ENCODE measurements at regions of chr11 and their contacts with region 1.

Region 1: DNA sequence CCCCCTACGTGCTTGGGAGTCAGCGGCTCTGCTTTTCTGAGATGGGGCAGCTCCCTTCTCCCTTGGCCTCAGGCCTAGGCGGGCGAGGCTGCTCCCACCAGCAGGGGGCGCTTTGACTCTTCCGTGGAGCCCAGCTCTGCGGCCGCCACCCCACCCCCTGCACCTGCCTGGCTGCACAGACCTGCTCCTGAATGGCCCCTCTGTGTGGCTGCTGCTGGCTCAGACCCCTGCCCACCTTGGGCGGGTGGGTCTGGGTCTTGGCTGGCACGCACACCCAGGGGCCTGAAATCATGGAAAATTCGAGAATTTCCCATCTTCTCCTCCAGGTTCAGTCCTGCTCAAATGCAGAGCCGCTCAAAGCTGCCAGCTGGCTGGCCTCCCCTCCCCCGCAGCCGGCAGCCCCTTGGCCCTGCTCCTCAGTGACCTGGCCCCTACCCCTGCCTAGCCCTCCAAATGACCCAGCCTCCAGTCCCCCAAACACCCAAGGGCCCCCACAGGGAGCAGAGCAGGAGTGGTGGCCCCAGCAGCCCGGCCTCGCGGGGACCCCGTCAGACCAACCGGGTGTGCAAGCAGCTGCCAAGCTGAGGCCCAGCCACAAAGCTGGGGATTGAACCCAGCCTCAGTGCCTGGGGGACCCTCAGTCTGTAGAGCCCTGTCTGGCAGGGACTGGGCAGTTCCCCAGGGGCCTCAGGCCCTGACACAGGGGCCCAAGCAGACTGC is 9.0 kb downstream of the PRR33 start:
- DNase-seq: peak; percentile 60
- H3K4me3 ChIP-seq: no peak overlapping the region
- H3K27ac ChIP-seq: no peak overlapping the region
- H3K4me1 ChIP-seq: no peaks in the 10 kb centered on the region
- H3K27me3 ChIP-seq: no peaks in the 10 kb centered on the region
- CTCF ChIP-seq: peak; percentile 91 to 98
- POLR2A ChIP-seq: no peak

Region 2: DNA sequence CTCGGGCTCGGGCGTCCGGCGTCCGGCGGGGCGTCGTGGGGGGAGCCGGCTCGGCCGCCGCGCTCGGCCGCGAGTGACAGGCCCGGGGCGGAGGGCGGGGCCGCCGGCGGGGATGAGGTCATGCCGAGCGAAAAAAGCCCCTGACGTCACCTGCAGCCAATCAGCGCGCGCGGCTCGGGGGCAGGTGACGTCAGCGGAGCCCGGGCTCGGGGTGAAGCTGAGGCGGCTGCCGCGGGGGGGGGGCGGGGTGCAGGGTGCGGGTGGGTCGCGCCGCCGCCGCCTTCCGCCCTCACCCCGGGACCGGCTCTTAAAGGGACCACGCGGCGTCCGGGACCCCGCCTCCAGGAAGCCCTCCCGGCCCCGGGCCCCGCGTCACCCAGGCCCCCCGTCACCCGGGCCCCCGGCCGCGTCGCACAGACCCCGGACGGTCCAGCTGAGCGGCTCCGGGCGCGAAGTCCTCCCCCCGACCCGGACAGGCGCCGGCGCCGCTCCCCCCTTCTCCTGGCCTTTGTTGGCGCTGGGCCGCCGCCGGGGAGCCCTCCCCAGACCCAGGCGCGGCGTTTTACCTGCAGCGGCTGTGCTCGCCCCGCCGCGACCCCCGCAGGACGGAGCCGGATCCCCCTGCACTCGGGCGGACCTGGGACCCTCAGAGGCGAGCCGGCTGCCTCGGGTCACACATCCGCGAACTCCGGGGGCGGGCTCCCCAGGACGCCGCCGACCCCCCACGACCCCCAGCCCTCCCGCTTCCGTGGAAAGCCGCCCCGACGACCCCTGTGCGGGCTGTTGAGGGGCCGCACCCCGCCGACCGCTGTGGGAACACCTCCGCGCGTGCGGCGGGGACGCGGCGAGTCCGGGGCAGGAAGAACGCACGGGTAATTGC is 310.2 kb before region 1 on chr11 and contains the start of gene DUSP8:
- CTCF ChIA-PET with region 1: no interaction called
- POLR2A ChIA-PET with region 1: no interaction called
- dilution Hi-C with region 1: no loop called
- intact Hi-C with region 1: no loop called
- DNase-seq: peak; percentile 80
- H3K4me3 ChIP-seq: peak within 1 kb of the TSS; percentile 29 to 43 (median 42)
- H3K27ac ChIP-seq: peak within 1 kb of the TSS; percentile 29
- H3K4me1 ChIP-seq: peaks cover 5% of the 10 kb centered on the region
- H3K27me3 ChIP-seq: peaks cover 10 to 16% of the 10 kb centered on the region in 2 experiments
- CTCF ChIP-seq: no peak
- POLR2A ChIP-seq: no peak
- total RNA-seq, gene DUSP8: 5.9 and 8.7 TPM in 2 replicates

Region 3: GRCh38 chr11:1694064-1694845 is 188.4 kb before region 1 on chr11:
- CTCF ChIA-PET with region 1: interaction called, 26 read pairs
- POLR2A ChIA-PET with region 1: no interaction called
- dilution Hi-C with region 1: no loop called
- intact Hi-C with region 1: no loop called
- DNase-seq: peak; percentile 56
- H3K4me3 ChIP-seq: no peak overlapping the region
- H3K27ac ChIP-seq: no peak overlapping the region
- H3K4me1 ChIP-seq: peaks cover 16% of the 10 kb centered on the region
- H3K27me3 ChIP-seq: no peaks in the 10 kb centered on the region
- CTCF ChIP-seq: peak; percentile 94 to 98
- POLR2A ChIP-seq: no peak

Region 4: GRCh38 chr11:1845561-1846452 is 36.9 kb before region 1 on chr11:
- CTCF ChIA-PET with region 1: interaction called, 16 read pairs
- POLR2A ChIA-PET with region 1: no interaction called
- dilution Hi-C with region 1: no loop called
- intact Hi-C with region 1: no loop called
- DNase-seq: no peak
- H3K4me3 ChIP-seq: no peak overlapping the region
- H3K27ac ChIP-seq: no peak overlapping the region
- H3K4me1 ChIP-seq: no peaks in the 10 kb centered on the region
- H3K27me3 ChIP-seq: no peaks in the 10 kb centered on the region
- CTCF ChIP-seq: no peak
- POLR2A ChIP-seq: no peak

Region 5: DNA sequence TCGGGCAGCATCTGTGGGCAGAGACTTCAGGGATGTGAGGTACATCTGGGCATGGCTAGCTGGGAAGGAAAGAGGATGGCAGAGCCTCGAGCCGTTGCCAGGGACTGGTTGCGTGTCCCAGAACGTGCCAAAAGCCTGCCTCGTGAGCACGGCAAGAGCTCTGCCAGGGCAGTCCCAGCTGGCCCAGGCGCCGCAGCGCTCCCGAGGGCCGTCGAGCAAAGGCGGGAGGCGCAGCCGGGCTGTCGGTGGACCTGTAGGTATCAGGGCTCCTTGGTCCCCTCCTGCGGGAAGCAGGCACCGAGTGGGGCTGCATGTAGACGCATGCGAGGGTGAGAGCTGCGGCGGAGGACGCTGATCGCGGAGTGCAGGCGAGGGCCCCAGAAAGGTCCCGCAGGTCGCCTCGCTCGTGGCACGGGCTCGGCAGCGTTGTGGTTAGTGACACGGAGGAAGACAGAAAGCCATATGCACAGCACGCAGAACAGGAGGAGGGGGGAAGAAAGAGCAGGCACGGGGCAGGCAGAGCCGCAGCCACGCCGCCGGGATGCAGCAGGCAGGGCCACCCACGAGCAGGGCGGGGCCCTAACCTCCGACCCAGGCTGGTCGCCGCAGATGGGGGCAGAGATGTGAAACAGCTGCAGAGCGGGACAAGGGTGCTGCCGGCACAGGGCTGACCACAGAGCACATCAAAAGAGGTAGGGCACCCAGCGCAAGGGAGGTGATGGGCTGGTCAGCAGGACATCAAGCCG is 11.8 kb before region 1 on chr11:
- CTCF ChIA-PET with region 1: interaction called, 21 read pairs
- POLR2A ChIA-PET with region 1: no interaction called
- dilution Hi-C with region 1: no loop called
- intact Hi-C with region 1: no loop called
- DNase-seq: no peak
- H3K4me3 ChIP-seq: no peak overlapping the region
- H3K27ac ChIP-seq: no peak overlapping the region
- H3K4me1 ChIP-seq: no peaks in the 10 kb centered on the region
- H3K27me3 ChIP-seq: peaks cover 0 to 3% of the 10 kb centered on the region in 2 experiments
- CTCF ChIP-seq: no peak
- POLR2A ChIP-seq: no peak

Region 6: GRCh38 chr11:1917671-1918516 is 35.2 kb after region 1 on chr11:
- CTCF ChIA-PET with region 1: interaction called, 20 read pairs
- POLR2A ChIA-PET with region 1: no interaction called
- dilution Hi-C with region 1: no loop called
- intact Hi-C with region 1: no loop called
- DNase-seq: no peak
- H3K4me3 ChIP-seq: no peak overlapping the region
- H3K27ac ChIP-seq: no peak overlapping the region
- H3K4me1 ChIP-seq: no peaks in the 10 kb centered on the region
- H3K27me3 ChIP-seq: no peaks in the 10 kb centered on the region
- CTCF ChIP-seq: peak; percentile 17 to 42
- POLR2A ChIP-seq: no peak

Region 7: DNA sequence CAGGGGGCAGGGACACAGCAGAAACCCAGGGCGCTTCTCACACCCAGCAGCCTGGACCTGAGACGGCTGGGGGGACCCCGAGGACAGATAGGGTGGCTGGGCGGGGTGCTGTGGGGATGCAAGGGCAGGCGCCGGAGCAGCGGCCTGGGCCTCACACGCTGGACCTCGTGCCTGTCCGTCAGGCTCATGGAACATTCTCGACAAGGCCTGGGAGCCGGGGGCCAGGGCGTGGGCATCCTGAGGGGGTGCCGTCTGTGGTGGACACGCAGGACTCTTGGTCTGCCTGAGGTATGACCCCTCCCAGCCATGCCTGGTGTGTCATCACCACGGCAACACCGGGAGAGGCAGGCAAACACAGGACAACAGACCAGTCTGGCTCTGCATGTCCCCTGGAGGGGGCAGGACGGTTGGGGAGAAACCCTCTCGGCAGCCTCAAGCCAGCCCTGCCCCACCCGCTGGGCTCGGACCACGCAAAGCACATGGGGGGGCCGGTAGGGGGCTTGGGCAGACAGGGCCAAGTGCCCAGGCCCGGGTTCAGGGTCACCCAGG is 85.8 kb after region 1 on chr11:
- CTCF ChIA-PET with region 1: interaction called, 23 read pairs
- POLR2A ChIA-PET with region 1: no interaction called
- dilution Hi-C with region 1: no loop called
- intact Hi-C with region 1: no loop called
- DNase-seq: no peak
- H3K4me3 ChIP-seq: no peak overlapping the region
- H3K27ac ChIP-seq: no peak overlapping the region
- H3K4me1 ChIP-seq: no peaks in the 10 kb centered on the region
- H3K27me3 ChIP-seq: no peaks in the 10 kb centered on the region
- CTCF ChIP-seq: no peak
- POLR2A ChIP-seq: no peak

Region 8: DNA sequence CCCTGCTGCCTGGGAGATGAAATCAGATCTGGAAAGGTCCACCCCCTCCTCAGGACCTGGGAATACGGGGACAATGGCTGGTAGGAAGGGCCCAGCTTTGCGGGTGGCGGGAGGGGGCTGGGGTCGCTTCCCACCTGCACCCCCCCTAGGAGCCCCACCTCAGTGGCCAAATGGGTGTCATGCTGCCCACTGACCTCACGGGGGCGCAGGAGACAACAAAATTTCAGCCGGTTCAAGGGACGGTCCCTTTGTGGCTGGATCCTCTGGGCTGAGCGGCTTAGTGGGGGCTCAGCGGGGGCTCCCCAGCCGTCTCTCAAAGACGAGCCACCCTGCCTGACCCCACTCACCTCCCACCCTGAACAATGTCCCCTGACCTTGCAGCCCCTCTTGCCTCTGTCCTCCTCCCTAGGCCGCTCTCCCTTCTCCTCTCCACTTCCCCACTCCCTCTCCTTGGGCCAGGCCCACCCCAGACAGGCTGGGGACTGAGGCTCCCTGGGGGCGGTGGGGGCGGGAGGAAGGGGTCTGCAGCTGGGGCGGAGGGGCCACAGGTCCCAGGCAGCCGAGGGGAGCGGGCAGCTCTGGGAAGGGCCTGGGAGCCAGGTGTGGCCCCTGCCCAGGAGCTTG is 154.3 kb after region 1 on chr11:
- CTCF ChIA-PET with region 1: interaction called, 34 read pairs
- POLR2A ChIA-PET with region 1: no interaction called
- dilution Hi-C with region 1: no loop called
- intact Hi-C with region 1: no loop called
- DNase-seq: no peak
- H3K4me3 ChIP-seq: no peak overlapping the region
- H3K27ac ChIP-seq: no peak overlapping the region
- H3K4me1 ChIP-seq: no peaks in the 10 kb centered on the region
- H3K27me3 ChIP-seq: no peaks in the 10 kb centered on the region
- CTCF ChIP-seq: no peak
- POLR2A ChIP-seq: no peak

Measured in endothelial cell of umbilical vein (primary cell).